Activated CD8-positive, alpha-beta T cell treated with anti-CD3 and anti-CD28 coated beads for 36 hours (primary cell): ENCODE measurements at regions of chr9 and their contacts with region 1.

Region 1: DNA sequence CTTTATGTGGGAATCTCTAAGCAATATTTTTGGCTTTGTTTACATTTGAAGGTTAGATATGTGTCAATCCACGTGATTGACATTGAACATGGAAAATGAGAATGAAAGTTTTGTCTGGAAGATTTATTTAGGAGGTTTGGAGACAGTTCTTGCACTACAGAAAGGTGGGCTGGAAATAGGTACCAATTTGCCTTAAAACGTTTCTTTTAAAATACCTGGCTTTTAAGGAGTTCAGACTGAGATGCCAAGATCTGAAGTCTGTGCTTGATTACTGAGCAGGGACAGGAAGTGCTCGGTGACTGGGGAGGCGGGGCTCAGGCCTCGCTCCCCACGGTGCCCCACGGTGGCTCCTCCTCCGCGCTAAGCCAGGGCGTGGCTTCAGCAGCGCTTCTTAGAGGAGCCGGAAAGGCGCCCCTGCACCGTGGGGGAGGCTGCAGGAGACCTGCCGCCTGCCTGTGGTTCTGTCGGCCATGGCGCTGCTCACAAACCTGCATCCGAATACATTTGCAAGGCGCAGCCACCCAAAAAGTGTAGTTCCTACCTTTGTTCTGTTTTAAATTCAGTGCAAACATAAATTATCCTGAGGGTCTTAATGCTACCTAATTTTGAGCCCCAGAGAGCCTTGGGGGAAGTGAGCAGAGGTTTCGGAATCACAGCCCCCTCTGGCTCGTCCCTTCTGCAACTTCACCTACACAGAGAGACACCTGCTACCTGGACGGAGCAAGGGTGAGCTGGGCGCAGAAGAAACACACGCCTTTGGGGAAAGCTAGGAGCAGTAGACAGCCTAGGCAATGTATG is 49.2 kb downstream of the USP20 start:
- DNase-seq: peak; percentile 98
- ATAC-seq: peak; percentile 57
- H3K4me3 Mint-ChIP-seq: peak overlapping the region; percentile 92
- H3K27ac Mint-ChIP-seq: peak overlapping the region; percentile 99
- H3K4me1 Mint-ChIP-seq: peaks cover 37% of the 10 kb centered on the region
- H3K27me3 Mint-ChIP-seq: no peaks in the 10 kb centered on the region
- CTCF ChIP-seq: no peak

Region 2: DNA sequence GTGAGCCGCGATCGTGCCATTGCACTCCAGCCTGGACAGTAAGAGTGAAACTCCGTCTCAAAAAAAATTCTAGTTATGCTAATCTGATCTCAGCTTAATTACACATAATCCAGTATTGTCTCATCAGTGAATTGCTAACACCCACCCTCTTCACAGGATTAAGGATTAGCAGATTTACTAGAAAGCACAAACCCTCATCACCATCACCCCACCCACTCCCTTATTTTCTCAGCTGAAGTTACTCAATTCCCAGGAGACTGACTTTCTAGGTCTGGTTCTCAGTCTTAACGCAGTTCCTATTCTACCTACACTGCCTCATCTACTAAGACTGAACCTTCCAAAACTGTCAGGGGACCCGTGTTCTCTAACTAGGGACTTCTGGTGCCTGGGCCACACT is 72.5 kb before region 1 on chr9:
- CTCF ChIA-PET with region 1: no interaction called
- POLR2A ChIA-PET with region 1: no interaction called
- intact Hi-C with region 1: no loop called
- DNase-seq: no peak
- ATAC-seq: peak; percentile 40
- H3K4me3 Mint-ChIP-seq: no peak overlapping the region
- H3K27ac Mint-ChIP-seq: peak overlapping the region; percentile 51
- H3K4me1 Mint-ChIP-seq: peaks cover 6% of the 10 kb centered on the region
- H3K27me3 Mint-ChIP-seq: no peaks in the 10 kb centered on the region
- CTCF ChIP-seq: no peak

Region 3: DNA sequence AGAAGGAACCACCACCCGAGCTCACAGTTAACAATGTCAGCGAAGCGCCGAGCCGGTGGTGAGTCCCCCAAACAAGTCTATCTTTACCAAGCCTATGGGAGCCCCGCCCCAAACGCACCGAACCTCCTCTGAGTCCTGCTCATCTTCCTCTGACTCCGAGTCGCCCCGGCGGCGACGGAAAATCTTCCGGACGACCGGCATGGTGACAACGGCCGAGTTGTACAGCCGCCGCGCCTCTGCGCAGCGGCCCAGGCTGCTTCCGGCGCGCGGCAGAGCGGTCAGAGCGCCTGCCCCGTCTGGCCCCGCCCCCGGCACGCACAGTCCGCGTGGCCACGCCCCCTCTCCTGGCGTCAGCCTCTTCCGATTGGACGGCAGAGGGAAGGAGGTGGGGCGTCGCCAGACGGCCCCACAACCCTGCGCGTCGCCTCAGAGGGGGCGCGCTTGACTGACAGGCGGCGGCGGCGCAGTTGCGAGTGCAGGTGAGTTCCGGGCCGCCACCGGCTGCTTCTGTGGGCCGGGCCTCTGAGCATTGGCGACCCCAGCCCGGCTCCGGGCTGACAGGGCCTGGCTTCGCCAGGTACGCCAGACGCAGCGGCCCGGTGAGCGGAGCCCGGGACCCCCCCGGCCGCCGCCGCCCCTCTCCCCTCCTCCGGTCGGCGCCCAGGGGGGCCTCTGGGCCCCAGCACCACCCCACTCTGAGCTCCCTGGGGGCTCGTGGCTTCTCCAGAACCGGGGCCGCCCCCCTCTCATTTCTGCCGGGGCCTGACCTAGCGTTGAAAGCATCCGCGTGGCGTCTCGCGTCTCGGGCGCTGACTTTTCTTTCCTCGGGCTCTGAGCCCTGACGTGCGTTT is 49.2 kb before region 1 on chr9 and contains the starts of genes C9orf78 and USP20:
- CTCF ChIA-PET with region 1: interaction called, 3 read pairs
- POLR2A ChIA-PET with region 1: interaction called, 21 read pairs
- intact Hi-C with region 1: loop called (anchors 5 kb)
- DNase-seq: peak; percentile 97
- ATAC-seq: peak; percentile 94
- H3K4me3 Mint-ChIP-seq: peak within 1 kb of the TSS; percentile 85
- H3K27ac Mint-ChIP-seq: peak within 1 kb of the TSS; percentile 95
- H3K4me1 Mint-ChIP-seq: peaks cover 54% of the 10 kb centered on the region
- H3K27me3 Mint-ChIP-seq: no peaks in the 10 kb centered on the region
- CTCF ChIP-seq: no peak
- total RNA-seq, gene C9orf78: 44.5 to 51.7 TPM
- total RNA-seq, gene USP20: 55.3 to 55.9 TPM

Region 4: DNA sequence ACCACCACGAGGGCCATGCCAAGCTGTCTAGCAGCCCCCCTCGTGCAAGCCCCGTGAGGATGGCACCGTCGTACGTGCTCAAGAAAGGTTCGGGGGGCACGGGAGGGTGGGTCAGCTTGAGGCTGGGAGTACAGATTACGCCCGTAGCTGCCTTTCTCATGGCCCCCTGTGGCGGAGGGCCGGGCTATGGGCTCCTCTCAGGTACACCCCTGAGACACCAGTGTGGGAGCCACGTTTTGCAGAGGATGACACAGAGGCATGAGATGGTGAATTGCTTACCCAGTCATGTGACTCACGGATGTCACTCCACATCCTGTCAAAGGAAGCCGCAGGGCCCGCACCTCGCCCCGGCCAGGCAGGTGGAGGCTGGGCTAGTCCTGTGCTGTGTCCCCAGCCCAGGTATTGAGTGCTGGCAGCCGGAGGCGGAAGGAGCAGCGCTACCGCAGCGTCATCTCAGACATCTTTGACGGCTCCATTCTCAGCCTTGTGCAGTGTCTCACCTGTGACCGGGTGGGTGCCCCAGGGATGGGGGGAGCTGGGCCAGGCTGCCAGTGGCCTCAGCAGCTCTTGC is 15.4 kb before region 1 on chr9:
- CTCF ChIA-PET with region 1: interaction called, 8 read pairs
- POLR2A ChIA-PET with region 1: interaction called, 114 read pairs
- intact Hi-C with region 1: no loop called
- DNase-seq: peak; percentile 93
- ATAC-seq: peak; percentile 81
- H3K4me3 Mint-ChIP-seq: peak overlapping the region; percentile 69
- H3K27ac Mint-ChIP-seq: peak overlapping the region; percentile 94
- H3K4me1 Mint-ChIP-seq: peaks cover 72% of the 10 kb centered on the region
- H3K27me3 Mint-ChIP-seq: no peaks in the 10 kb centered on the region
- CTCF ChIP-seq: peak; percentile 22

Region 5: DNA sequence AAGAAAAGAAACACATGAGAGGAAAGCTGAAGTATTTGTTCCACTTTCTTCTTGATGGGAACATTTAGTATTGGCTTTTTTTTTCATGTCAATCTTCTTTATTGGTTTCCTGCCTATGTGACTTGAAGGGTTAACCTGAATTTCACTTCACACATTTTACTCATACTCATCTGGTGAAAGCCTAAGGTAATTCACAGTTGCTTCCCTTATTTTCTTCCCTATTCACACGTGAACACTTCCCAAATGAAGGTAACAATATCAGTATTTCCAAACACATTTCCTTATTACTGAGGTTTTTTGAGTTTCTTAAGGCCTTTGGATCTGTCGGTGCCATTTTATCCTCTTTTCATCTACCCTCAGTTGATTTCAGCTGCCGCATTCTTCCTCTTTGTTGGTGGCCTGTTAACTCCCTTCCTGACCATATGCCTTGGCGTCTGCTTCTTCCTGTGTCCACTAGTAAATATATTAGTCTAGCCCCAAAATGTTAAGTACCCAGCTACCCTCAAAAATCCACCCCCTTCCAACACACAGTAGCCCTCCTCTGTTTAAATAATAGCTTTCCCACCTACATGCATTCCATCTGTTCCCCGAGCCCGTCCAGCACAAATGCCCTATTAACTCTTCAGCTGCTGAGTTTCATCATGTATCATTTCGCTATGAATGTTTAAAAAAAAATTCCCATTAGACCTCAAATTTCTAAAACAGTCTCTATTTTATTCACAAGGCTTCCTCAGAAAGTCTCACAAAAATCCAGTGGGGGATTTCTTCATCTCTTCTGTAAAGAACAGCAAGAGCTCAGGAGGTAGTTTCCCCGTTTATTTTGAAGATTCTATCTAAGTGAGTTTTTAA is 48.1 kb after region 1 on chr9:
- CTCF ChIA-PET with region 1: interaction called, 12 read pairs
- POLR2A ChIA-PET with region 1: interaction called, 5 read pairs
- intact Hi-C with region 1: no loop called
- DNase-seq: no peak
- ATAC-seq: peak; percentile 31
- H3K4me3 Mint-ChIP-seq: peak overlapping the region; percentile 55
- H3K27ac Mint-ChIP-seq: peak overlapping the region; percentile 87
- H3K4me1 Mint-ChIP-seq: peaks cover 64% of the 10 kb centered on the region
- H3K27me3 Mint-ChIP-seq: no peaks in the 10 kb centered on the region
- CTCF ChIP-seq: no peak

Region 6: GRCh38 chr9:129962889-129963703 is 78.7 kb after region 1 on chr9:
- CTCF ChIA-PET with region 1: interaction called, 3 read pairs
- POLR2A ChIA-PET with region 1: interaction called, 25 read pairs
- intact Hi-C with region 1: loop called (anchors 5 kb)
- DNase-seq: peak; percentile 86
- ATAC-seq: peak; percentile 93
- H3K4me3 Mint-ChIP-seq: peak overlapping the region; percentile 79
- H3K27ac Mint-ChIP-seq: peak overlapping the region; percentile 89
- H3K4me1 Mint-ChIP-seq: peaks cover 82% of the 10 kb centered on the region
- H3K27me3 Mint-ChIP-seq: no peaks in the 10 kb centered on the region
- CTCF ChIP-seq: no peak

Region 7: DNA sequence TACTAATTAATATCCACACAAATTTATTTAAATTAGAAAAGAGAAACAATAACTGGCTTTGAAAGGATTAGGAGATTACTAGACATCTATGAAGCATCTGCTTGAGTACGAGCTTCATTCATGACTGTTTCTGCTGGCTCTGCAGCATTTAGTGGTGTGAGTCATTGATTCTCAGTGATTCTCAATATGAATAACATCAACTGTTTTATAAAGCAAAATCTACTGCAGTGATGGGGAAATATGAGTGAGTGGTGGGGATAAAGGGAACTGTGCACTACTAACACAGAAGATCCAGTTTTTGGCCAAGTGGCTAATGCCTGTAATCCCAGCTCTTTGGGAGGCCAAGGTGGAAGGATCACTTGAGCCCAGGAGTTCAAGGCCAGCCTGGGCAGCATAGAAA is 150.2 kb after region 1 on chr9:
- CTCF ChIA-PET with region 1: interaction called, 18 read pairs
- POLR2A ChIA-PET with region 1: interaction called, 39 read pairs
- intact Hi-C with region 1: no loop called
- DNase-seq: peak; percentile 61
- ATAC-seq: peak; percentile 53
- H3K4me3 Mint-ChIP-seq: peak overlapping the region; percentile 97
- H3K27ac Mint-ChIP-seq: peak overlapping the region; percentile 100
- H3K4me1 Mint-ChIP-seq: peaks cover 74% of the 10 kb centered on the region
- H3K27me3 Mint-ChIP-seq: no peaks in the 10 kb centered on the region
- CTCF ChIP-seq: no peak